ENCODE measurements at regions of chr15 and their contacts with region 1.

Region 1: DNA sequence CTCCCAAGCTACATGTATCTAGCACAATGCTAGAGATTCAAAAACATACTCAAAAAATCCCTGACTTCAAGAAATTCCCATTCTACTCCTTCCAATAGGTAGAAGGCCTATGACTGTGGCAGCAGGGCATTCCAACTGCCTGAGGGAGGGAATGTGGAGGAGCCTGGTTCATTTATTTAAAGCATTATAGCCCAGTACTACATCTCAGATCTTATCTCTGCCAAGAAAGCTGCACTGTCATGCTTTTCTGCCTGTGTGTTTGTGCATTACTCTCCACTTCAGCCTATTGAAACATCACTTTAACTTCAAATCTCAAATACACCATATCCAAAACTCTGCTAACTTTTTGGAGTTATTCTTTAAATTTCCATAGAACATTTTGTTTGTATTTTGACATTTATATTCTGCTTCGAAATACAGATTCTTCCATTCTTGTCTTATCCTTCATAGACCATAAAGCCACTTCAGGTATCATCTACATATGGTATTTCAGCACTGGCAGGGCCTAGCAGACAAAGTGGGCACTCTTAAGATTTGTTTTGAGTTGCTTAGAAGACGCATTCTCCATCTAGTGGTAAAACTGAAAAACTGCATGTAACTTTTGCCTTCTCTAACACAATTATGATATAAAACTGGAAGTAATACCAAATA is 59.1 kb upstream of the NEDD4 start:
- DNase-seq: no peak
- H3K4me3 ChIP-seq: no peak overlapping the region
- H3K27me3 ChIP-seq: no peaks in the 10 kb centered on the region
- CTCF ChIP-seq: peak; percentile 79

Region 2: GRCh38 chr15:55993111-55993803 is 59.3 kb before region 1 on chr15 and contains the start of gene NEDD4:
- CTCF ChIA-PET with region 1: interaction called, 10 read pairs
- POLR2A ChIA-PET with region 1: no interaction called
- DNase-seq: no peak
- H3K4me3 ChIP-seq: peak within 1 kb of the TSS; percentile 83
- H3K27me3 ChIP-seq: no peaks in the 10 kb centered on the region
- CTCF ChIP-seq: peak; percentile 62
- polyA plus RNA-seq, gene NEDD4: 13.3 and 24.0 TPM in 2 replicates

Region 3: GRCh38 chr15:56383010-56383409 is 330.5 kb after region 1 on chr15:
- CTCF ChIA-PET with region 1: no interaction called
- POLR2A ChIA-PET with region 1: no interaction called
- DNase-seq: no peak
- H3K4me3 ChIP-seq: no peak overlapping the region
- H3K27me3 ChIP-seq: no peaks in the 10 kb centered on the region
- CTCF ChIP-seq: no peak

Measured in BJ (cell line).